GM12878 (cell line): ENCODE measurements at regions of chr2 and their contacts with region 1.

Region 1: GRCh38 chr2:20446917-20447436 is at the start of gene RHOB:
- DNase-seq: peak; percentile 74
- ATAC-seq: peak; percentile 98
- H3K4me3 ChIP-seq: peak within 1 kb of the TSS; percentile 60; the same call in 1 of the 2 replicates
- H3K27ac ChIP-seq: no peak within 1 kb of the TSS
- H3K4me1 ChIP-seq: peaks cover 3% of the 10 kb centered on the region
- H3K27me3 ChIP-seq: peaks cover 5 to 9% of the 10 kb centered on the region in 2 experiments; a peak in 3 of 4 replicates
- CTCF ChIP-seq: no peak
- EP300 ChIP-seq: no peak
- POLR2A ChIP-seq: peak; percentile 98
- RAD21 ChIP-seq: 0 out of 2 replicates have a peak, but pooled peaks have one; percentile 11
- polyA plus RNA-seq, gene RHOB: 0.03 to 0.35 TPM

Region 2: DNA sequence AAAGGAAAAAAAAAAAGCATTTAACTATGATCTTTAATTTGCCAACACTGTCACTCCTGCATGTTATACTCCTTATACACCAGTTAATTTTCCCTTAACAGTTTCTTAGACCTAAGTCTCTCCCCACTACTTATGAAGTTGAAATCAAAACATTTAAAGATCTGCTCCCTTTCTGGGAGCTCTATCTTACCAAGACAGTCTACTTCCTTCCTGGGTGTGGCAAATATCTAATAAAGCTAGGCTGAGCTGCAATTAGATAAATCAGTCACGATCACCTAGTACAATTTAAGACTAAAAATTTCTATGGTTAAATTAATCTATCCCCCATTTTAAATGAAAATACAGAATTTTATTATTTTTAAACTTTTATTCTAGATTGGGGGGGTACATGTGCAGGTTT is 129.8 kb before region 1 on chr2:
- CTCF ChIA-PET with region 1: no interaction called
- POLR2A ChIA-PET with region 1: no interaction called
- RAD21 ChIA-PET with region 1: no interaction called
- SMC1A ChIA-PET with region 1: no interaction called
- in situ Hi-C with region 1: no loop called
- intact Hi-C with region 1: no loop called
- DNase-seq: no peak
- ATAC-seq: no peak
- H3K4me3 ChIP-seq: no peak overlapping the region
- H3K27ac ChIP-seq: no peak overlapping the region
- H3K4me1 ChIP-seq: no peaks in the 10 kb centered on the region
- H3K27me3 ChIP-seq: no peaks in the 10 kb centered on the region
- CTCF ChIP-seq: no peak
- EP300 ChIP-seq: no peak
- POLR2A ChIP-seq: no peak
- RAD21 ChIP-seq: no peak

Region 3: DNA sequence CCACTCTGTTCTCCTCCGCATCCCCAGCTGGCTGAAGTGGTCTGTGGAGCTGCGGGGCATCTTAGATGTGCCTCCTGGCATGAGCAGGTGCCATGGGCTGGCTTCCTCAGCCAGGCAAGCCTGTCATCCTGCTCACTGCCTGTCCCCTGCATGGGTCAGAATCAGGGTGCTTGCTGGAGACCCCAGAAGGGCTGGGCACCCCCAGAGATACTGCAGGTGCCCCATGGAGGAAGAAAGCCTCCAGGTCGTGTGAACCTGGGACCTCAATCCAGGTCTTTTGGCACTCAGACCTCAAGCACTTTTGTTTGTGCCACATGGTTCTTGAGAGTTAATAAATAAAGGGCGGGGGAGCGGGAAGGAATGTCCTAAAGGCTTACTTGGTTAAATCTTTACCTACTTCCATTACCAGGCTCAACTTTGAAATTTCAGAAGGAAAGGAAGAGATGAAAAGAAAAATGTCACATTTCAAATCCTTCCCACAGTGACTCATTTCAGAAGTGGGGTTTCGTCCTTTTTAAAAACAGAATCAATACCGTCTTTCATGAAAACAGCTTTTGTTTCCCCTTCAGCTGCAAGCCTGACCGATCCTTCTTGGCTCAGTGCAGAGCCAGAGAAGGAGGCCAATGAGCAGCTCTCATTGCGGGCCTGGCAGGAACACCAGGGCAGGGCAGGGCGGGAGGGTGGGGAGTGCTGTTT is 69.8 kb after region 1 on chr2:
- CTCF ChIA-PET with region 1: interaction called, 3 read pairs
- POLR2A ChIA-PET with region 1: no interaction called
- RAD21 ChIA-PET with region 1: interaction called, 10 read pairs
- SMC1A ChIA-PET with region 1: interaction called, 4 read pairs
- in situ Hi-C with region 1: no loop called
- intact Hi-C with region 1: no loop called
- DNase-seq: peak; percentile 70
- ATAC-seq: peak; percentile 95
- H3K4me3 ChIP-seq: no peak overlapping the region
- H3K27ac ChIP-seq: peak overlapping the region; percentile 53; the same call in 1 of the 2 replicates
- H3K4me1 ChIP-seq: peaks cover 14% of the 10 kb centered on the region
- H3K27me3 ChIP-seq: no peaks in the 10 kb centered on the region; a peak in 1 of 4 replicates
- CTCF ChIP-seq: no peak
- EP300 ChIP-seq: peak; percentile 55 to 68; a peak in 2 of 4 replicates
- POLR2A ChIP-seq: no peak
- RAD21 ChIP-seq: no peak

Region 4: DNA sequence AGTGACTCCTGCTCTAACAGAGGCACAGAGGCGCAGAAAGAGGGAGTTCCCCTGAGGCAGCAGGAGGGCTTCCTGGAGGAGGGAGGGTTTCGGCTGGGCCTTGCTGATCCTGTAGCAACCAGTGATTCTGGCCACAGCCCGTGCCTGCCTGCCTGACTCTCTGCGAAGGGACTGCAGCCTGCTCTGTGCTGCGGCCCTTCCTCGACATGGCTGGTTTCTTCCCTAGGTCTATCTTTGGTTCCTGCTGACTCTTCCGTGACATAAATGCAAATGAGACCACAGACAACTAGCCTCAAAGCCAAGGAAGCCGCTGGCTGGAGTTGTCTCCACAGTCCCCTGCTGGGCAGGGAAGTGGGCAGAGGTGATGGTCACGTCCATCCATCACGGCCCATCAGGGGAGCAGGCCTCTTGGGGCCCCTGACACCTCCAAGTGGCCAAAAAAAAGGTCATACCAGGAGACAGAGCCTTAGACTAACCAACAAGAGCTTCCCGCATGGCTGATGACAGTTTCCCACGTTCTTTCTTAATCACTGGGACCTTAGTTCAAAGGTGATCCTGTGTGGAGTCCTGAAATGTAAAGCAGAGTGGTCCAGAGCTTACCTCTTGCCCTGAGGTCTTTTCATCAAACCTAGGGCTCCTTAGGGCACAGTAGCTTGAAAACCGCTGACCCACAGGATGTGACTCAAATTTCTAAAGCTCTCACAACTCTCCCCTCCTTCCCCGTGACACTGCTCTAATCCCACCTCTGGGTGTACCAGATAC is 148.6 kb after region 1 on chr2:
- CTCF ChIA-PET with region 1: interaction called, 14 read pairs
- POLR2A ChIA-PET with region 1: interaction called, 4 read pairs
- RAD21 ChIA-PET with region 1: interaction called, 22 read pairs
- SMC1A ChIA-PET with region 1: interaction called, 18 read pairs
- in situ Hi-C with region 1: no loop called
- intact Hi-C with region 1: loop called (anchors 5 kb)
- DNase-seq: peak; percentile 85
- ATAC-seq: peak; percentile 92
- H3K4me3 ChIP-seq: peak overlapping the region; percentile 25; the same call in 1 of the 2 replicates
- H3K27ac ChIP-seq: peak overlapping the region; percentile 79
- H3K4me1 ChIP-seq: peaks cover 38% of the 10 kb centered on the region
- H3K27me3 ChIP-seq: no peaks in the 10 kb centered on the region
- CTCF ChIP-seq: no peak
- EP300 ChIP-seq: peak; percentile 13 to 50; a peak in 3 of 4 replicates
- POLR2A ChIP-seq: peak; percentile 81
- RAD21 ChIP-seq: 0 out of 2 replicates have a peak, but pooled peaks have one; percentile 5

Region 5: DNA sequence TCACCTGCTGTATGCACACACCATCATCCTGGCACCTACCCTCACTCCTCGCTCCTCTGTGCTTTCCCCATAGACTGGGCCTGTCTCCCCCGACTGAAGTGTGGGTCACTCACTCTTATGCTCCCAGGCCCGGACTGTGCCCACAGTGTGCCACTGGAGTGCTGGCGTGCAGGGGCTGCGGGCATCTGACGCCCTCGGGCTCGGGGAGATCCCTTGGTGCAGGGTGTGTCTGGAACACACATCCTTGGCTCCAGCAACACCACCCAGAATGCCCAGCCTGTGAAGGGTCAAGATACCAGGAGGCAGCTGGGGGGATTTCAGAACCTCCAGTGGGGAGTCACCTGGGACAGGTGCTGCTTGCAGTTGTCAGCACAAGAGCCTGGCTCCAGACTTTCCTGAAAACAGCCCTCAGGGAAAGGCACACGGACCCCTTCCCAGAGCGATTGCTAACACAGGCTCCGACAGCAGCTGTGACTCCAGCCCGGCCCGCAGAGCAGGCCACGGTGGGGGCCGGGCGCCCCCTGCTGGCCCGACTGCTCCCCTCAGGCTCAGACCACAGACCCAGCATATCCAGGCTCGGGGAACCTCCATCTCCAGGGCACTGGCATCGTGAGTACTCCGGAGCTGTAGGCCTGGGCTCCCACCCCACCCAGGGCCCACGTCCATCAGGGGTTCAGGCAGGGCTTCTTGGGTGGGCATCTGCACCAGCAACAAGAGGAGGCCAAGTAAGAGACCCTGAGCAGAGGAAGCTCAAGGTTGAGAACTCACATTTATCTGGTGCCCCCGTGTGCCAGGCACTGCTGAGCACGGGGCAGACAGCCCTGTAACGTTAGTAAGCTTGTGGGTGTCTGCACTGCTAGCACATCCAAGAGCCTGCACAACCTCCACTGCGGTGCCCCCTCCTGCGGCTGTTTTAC is 195.3 kb after region 1 on chr2:
- CTCF ChIA-PET with region 1: interaction called, 119 read pairs
- POLR2A ChIA-PET with region 1: no interaction called
- RAD21 ChIA-PET with region 1: interaction called, 33 read pairs
- SMC1A ChIA-PET with region 1: interaction called, 56 read pairs
- in situ Hi-C with region 1: loop called (anchors 5 kb)
- intact Hi-C with region 1: loop called (anchors 1 kb)
- DNase-seq: no peak
- ATAC-seq: peak; percentile 100
- H3K4me3 ChIP-seq: no peak overlapping the region
- H3K27ac ChIP-seq: no peak overlapping the region
- H3K4me1 ChIP-seq: no peaks in the 10 kb centered on the region
- H3K27me3 ChIP-seq: no peaks in the 10 kb centered on the region
- CTCF ChIP-seq: peak; percentile 87 to 96 (median 91)
- EP300 ChIP-seq: no peak
- POLR2A ChIP-seq: no peak
- RAD21 ChIP-seq: peak; percentile 98

Region 6: GRCh38 chr2:20822535-20823490 is 375.8 kb after region 1 on chr2 and contains the start of gene LDAH:
- CTCF ChIA-PET with region 1: no interaction called
- POLR2A ChIA-PET with region 1: no interaction called
- RAD21 ChIA-PET with region 1: no interaction called
- SMC1A ChIA-PET with region 1: interaction called, 3 read pairs
- in situ Hi-C with region 1: no loop called
- intact Hi-C with region 1: loop called (anchors 10 kb)
- DNase-seq: peak; percentile 36
- ATAC-seq: peak; percentile 90
- H3K4me3 ChIP-seq: peak within 1 kb of the TSS; percentile 97
- H3K27ac ChIP-seq: peak within 1 kb of the TSS; percentile 94
- H3K4me1 ChIP-seq: no peaks in the 10 kb centered on the region
- H3K27me3 ChIP-seq: no peaks in the 10 kb centered on the region
- CTCF ChIP-seq: no peak
- EP300 ChIP-seq: 0 out of 4 replicates have a peak, but pooled peaks of 1 of the 2 experiments have one; percentile 20
- POLR2A ChIP-seq: peak; percentile 87
- RAD21 ChIP-seq: no peak
- polyA plus RNA-seq, gene LDAH: 18.7 to 25.0 TPM